Dorsolateral prefrontal cortex (tissue), 120 donors: ENCODE measurements at regions of chr20 and their contacts with region 1.

Region 1: GRCh38 chr20:5788385-5788895 is 38.2 kb downstream of the SHLD1 start:
- DNase-seq: peak; percentile 26 to 91 (median 72)
- H3K4me3 ChIP-seq: no peak overlapping the region
- H3K27ac ChIP-seq: peak overlapping the region in 6 of 59 donors; percentile 3 to 30 (median 14)
- H3K27me3 ChIP-seq: no peaks in the 10 kb centered on the region
- CTCF ChIP-seq: peak; percentile 82 to 98 (median 93)

Region 2: GRCh38 chr20:5529331-5530148 is 258.9 kb before region 1 on chr20:
- intact Hi-C with region 1: loop called (anchors 2 kb)
- DNase-seq: peak; percentile 66 to 89 (median 84)
- H3K4me3 ChIP-seq: peak overlapping the region in 37 of 59 donors; percentile 0 to 52 (median 26)
- H3K27ac ChIP-seq: peak overlapping the region in 7 of 59 donors; percentile 1 to 70 (median 29)
- H3K27me3 ChIP-seq: no peaks in the 10 kb centered on the region
- CTCF ChIP-seq: peak; percentile 45 to 93 (median 77)

Region 3: DNA sequence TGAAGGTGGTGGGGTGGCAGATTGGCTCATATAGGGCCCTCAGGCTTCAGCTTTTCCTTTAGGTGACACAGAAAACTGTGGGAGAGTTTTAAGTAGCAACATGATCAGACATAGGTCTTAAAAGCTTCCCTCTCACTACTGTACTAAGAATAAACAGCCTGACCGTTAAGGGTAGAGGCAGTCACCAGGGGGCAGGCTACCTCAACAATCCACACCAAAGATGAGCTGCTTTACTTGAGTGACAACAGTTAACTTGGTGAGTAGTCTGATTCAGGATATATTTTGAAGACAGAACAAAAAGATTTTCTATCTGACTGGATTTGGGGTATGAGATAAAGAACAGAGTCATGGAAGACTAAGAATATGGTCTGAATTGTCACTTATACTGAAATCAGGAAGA is 231.3 kb before region 1 on chr20:
- intact Hi-C with region 1: loop called (anchors 5 to 10 kb)
- DNase-seq: peak in 9 of 10 donors; percentile 26 to 77 (median 54)
- H3K4me3 ChIP-seq: no peak overlapping the region
- H3K27ac ChIP-seq: no peak overlapping the region
- H3K27me3 ChIP-seq: no peaks in the 10 kb centered on the region
- CTCF ChIP-seq: peak; percentile 30 to 76 (median 58)

Region 4: GRCh38 chr20:5569021-5569420 is 219.4 kb before region 1 on chr20:
- intact Hi-C with region 1: loop called in 1 of 2 experiments (anchors 10 kb)
- DNase-seq: peak in 3 of 10 donors; percentile 17 to 60 (median 37)
- H3K4me3 ChIP-seq: no peak overlapping the region
- H3K27ac ChIP-seq: peak overlapping the region in 1 of 59 donors; percentile 28
- H3K27me3 ChIP-seq: no peaks in the 10 kb centered on the region
- CTCF ChIP-seq: peak in 55 of 56 donors; percentile 31 to 76 (median 55)

Region 5: GRCh38 chr20:6008254-6008653 is 219.8 kb after region 1 on chr20:
- intact Hi-C with region 1: no loop called
- DNase-seq: peak in 4 of 10 donors; percentile 15 to 79 (median 58)
- H3K4me3 ChIP-seq: peak overlapping the region in 43 of 59 donors; percentile 0 to 97 (median 87)
- H3K27ac ChIP-seq: peak overlapping the region in 39 of 59 donors; percentile 9 to 93 (median 46)
- H3K27me3 ChIP-seq: no peaks in the 10 kb centered on the region
- CTCF ChIP-seq: no peak

Region 6: GRCh38 chr20:6074145-6074561 is 285.7 kb after region 1 on chr20:
- intact Hi-C with region 1: loop called (anchors 10 kb)
- DNase-seq: no peak
- H3K4me3 ChIP-seq: no peak overlapping the region
- H3K27ac ChIP-seq: no peak overlapping the region
- H3K27me3 ChIP-seq: peaks cover 0 to 7% (median 0%) of the 10 kb centered on the region in 45 donors
- CTCF ChIP-seq: peak in 6 of 56 donors; percentile 14 to 33 (median 23)